OCI-LY7 (cell line): ENCODE measurements at regions of chr1 and their contacts with region 1.

Region 1: DNA sequence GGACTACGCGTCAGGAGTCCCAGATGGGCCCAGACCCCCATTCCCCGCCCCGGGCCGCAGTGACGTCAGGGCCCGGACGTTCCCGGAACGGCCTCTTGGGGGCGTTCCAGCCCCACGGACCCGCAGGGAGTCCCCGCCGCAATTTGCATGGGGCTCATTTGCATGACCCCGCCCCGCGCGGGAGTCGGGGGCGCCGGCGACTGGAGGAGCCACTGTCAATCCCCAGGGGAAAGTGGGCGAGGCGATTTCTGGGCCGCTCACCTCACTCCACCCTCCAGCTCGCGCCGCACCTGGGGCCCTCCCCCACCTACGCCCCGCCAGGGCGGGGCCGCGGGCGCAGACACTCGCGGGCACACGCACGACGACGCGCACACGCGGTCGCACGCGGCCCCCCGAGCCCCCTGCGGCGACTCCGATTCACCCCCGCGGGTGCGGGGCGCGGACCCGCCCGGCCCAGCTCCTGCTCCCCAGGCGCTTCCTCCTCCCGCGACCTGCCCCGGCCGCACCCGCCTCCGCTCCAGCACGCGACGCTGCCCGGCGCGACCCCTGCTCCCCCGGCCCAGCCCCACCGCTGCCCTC is 13.2 kb downstream of the AGRN start:
- DNase-seq: peak; percentile 97
- H3K4me3 ChIP-seq: peak overlapping the region; percentile 62
- H3K27ac ChIP-seq: no peak overlapping the region
- H3K4me1 ChIP-seq: peaks cover 26% of the 10 kb centered on the region
- CTCF ChIP-seq: peak; percentile 83

Region 2: GRCh38 chr1:983799-984473 is 49.2 kb before region 1 on chr1:
- CTCF ChIA-PET with region 1: no interaction called
- POLR2A ChIA-PET with region 1: no interaction called
- intact Hi-C with region 1: loop called (anchors 10 kb)
- DNase-seq: peak; percentile 52
- H3K4me3 ChIP-seq: no peak overlapping the region
- H3K27ac ChIP-seq: no peak overlapping the region
- H3K4me1 ChIP-seq: no peaks in the 10 kb centered on the region
- CTCF ChIP-seq: peak; percentile 83

Region 3: DNA sequence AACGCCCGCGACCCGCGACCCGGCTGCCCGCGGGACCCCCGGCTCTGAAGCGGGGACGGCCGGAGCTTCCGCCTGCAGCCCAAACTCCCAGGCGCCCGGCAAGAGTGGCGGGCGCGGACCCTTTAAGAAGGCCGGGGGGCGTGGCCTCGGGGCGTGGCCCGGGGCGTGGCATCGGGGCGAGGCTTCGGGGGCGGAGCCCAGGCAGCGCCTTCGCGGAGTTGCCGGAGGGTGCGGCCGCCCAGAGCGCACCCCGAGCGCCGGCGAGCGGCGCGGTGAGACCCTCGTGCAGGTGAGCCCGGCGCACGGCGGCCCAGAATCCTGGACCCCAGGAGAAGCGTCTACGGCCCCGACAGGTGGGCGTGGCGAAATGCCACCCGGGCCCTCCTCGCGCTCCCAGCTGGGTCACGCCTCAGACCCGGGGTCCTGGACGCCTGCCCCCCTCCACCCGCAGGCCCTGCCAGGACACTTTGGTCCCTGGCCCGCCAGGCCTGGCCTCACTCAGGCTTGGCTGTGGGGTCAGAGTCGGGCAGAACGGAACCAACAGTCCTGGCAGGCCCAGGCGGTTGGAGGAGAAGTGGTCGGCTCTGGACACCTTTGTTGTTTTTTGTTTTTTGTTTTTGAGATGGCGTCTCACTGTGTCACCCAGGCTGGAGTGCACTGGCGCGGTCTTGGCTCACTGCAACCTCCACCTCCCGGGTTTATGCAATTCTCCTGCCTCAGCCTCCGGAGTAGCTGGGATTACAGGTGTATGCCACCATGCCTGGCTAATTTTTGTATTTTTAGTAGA is 26.6 kb after region 1 on chr1:
- CTCF ChIA-PET with region 1: interaction called, 5 read pairs
- POLR2A ChIA-PET with region 1: no interaction called
- intact Hi-C with region 1: loop called (anchors 1 kb)
- DNase-seq: peak; percentile 92
- H3K4me3 ChIP-seq: peak overlapping the region; percentile 68
- H3K27ac ChIP-seq: no peak overlapping the region
- H3K4me1 ChIP-seq: peaks cover 12% of the 10 kb centered on the region
- CTCF ChIP-seq: peak; percentile 37; the same call in 1 of the 2 replicates

Region 4: DNA sequence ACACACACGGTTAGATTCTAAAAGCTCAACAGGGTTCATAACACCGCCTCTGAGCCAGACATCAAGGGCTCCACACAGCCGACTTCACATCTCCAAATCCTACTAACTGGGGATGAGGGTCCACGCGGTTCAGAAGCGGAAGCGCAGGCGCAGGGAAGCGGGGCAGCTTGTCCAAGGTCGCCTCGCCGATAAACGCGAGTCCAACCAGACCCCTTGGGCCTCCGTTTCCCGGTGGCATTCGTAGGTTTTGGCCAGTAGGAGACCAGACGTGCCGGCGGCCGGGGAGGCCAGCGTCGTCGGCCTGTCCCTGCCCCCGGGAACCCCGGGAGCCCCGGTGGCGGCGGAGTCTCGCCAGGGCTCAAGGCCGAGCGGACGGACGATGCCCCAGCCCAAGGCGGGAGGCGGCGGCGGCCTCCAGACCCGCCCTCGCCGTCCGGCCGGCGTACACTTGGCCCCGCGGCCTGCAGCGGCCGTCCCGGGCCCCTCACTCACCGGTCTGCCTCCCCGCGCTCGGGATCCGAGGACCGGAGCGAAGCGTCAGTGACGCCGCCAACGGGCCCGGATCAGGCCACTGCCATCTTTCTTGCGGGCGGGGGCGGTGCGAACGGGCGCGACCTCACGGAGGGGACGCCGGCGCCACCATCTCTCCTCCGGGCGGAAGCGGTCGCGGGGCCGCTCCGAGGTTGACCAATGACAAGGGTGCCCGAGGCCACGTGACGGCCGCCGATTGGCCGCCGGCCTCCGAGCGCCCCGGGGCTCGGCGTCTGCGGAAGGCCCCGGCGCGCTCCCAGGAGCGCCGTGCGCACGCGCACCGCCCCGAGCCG is 198.5 kb after region 1 on chr1 and contains the start of gene SDF4:
- CTCF ChIA-PET with region 1: no interaction called
- POLR2A ChIA-PET with region 1: no interaction called
- intact Hi-C with region 1: loop called (anchors 10 kb)
- DNase-seq: peak; percentile 97
- H3K4me3 ChIP-seq: peak within 1 kb of the TSS; percentile 78
- H3K27ac ChIP-seq: peak within 1 kb of the TSS; percentile 43
- H3K4me1 ChIP-seq: peaks cover 28% of the 10 kb centered on the region
- CTCF ChIP-seq: no peak
- total RNA-seq, gene SDF4: 44.2 and 47.7 TPM in 2 replicates

Region 5: DNA sequence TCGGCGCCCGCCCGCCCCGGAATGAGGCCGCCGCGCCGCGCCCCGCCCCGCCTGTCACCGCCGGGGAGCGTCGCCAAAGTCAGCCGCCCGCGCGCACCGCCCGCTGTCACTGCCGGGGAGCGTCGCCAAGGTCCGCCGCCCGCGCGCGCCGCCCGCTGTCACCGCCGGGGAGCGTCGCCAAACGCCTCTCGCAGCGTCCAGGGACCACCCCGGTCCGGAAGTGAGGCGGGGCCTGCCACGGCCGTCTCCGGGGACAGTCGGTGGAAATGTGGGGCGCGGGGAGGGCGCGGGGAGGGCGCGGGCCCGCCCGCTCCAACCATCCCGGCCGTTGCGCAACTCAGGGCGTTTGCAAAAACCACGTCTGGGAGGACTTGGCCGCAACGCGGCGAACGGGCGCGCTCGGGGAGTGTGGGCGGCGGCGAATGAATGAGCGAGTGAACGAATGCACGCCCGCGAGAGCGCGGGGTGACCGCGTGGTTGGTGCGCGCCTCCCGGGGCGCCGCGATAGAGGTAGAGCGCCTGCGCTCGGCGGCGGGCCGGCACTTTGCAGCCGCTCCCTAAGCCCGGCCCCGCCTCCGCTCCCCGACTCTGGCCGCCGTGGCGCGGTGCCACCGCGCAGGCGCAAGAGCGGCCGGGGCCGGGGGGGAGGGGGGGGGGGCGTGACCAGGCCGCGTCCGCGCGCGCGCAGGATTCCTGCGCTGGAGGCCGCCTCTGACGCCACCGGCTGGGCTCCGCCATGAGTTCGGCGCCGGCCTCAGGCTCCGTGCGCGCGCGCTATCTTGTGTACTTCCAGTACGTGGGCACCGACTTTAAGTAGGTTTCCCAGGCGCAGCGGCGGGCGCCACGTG is 275.0 kb after region 1 on chr1 and contains the starts of genes ACAP3 and PUSL1:
- CTCF ChIA-PET with region 1: no interaction called
- POLR2A ChIA-PET with region 1: no interaction called
- intact Hi-C with region 1: loop called (anchors 5 kb)
- DNase-seq: peak; percentile 95
- H3K4me3 ChIP-seq: peak within 1 kb of the TSS; percentile 90
- H3K27ac ChIP-seq: peak within 1 kb of the TSS; percentile 88
- H3K4me1 ChIP-seq: peaks cover 35% of the 10 kb centered on the region
- CTCF ChIP-seq: no peak
- total RNA-seq, gene ACAP3: 26.3 and 26.8 TPM in 2 replicates
- total RNA-seq, gene PUSL1: 41.8 and 57.1 TPM in 2 replicates